GM12878 (cell line): ENCODE measurements at regions of chr2 and their contacts with region 1.

Region 1: GRCh38 chr2:229852565-229852964 is 69.2 kb downstream of the TRIP12 start:
- DNase-seq: peak; percentile 42
- ATAC-seq: peak; percentile 84
- H3K4me3 ChIP-seq: no peak overlapping the region
- H3K27ac ChIP-seq: no peak overlapping the region; the same call in 1 of the 2 replicates
- H3K4me1 ChIP-seq: peaks cover 6% of the 10 kb centered on the region; the same call in 1 of the 2 replicates
- H3K27me3 ChIP-seq: no peaks in the 10 kb centered on the region
- CTCF ChIP-seq: no peak
- EP300 ChIP-seq: no peak
- POLR2A ChIP-seq: no peak
- RAD21 ChIP-seq: no peak

Region 2: DNA sequence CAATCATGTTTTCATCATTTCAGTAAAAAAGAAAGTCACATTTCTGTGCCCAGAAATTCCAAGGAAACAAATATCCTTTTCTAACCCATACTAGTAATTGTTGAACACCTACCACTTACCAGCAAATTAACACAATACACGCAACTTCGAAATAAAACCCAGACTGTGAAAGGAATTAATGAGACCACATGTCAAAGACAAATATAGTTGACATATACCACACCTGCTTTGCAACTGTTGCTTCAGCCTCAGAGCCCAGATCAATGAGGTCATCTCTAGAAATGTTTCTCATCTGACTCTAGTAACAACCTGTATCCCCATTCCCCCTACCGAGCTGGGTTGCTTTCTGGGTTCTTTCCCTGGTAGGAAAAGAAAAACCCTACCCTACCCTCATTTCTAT is 16.7 kb after region 1 on chr2:
- CTCF ChIA-PET with region 1: interaction called, 5 read pairs
- POLR2A ChIA-PET with region 1: interaction called, 3 read pairs
- RAD21 ChIA-PET with region 1: interaction called, 4 read pairs
- SMC1A ChIA-PET with region 1: interaction called, 10 read pairs
- in situ Hi-C with region 1: no loop called
- intact Hi-C with region 1: no loop called
- DNase-seq: no peak
- ATAC-seq: peak; percentile 73
- H3K4me3 ChIP-seq: no peak overlapping the region
- H3K27ac ChIP-seq: no peak overlapping the region
- H3K4me1 ChIP-seq: peaks cover 11% of the 10 kb centered on the region; the same call in 1 of the 2 replicates
- H3K27me3 ChIP-seq: no peaks in the 10 kb centered on the region
- CTCF ChIP-seq: no peak
- EP300 ChIP-seq: peak; percentile 52 to 61; a peak in 2 of 4 replicates
- POLR2A ChIP-seq: no peak
- RAD21 ChIP-seq: no peak